Kidney (tissue), 22 donors: ENCODE measurements at regions of chr10 and their contacts with region 1.

Region 1: GRCh38 chr10:124530215-124530665 is 68.6 kb downstream of the LHPP start:
- DNase-seq: peak; percentile 86 to 94 (median 92)
- H3K4me3 ChIP-seq: no peak overlapping the region
- H3K27ac ChIP-seq: peak overlapping the region in 1 of 2 donors; percentile 4
- H3K4me1 ChIP-seq: peaks cover 0 to 2% (median 0%) of the 10 kb centered on the region in 3 donors
- H3K27me3 ChIP-seq: no peaks in the 10 kb centered on the region
- CTCF ChIP-seq: peak; percentile 96

Region 2: GRCh38 chr10:124632064-124632531 is 101.9 kb after region 1 on chr10:
- intact Hi-C with region 1: no loop called
- DNase-seq: peak in 2 of 5 donors; percentile 48 to 49
- H3K4me3 ChIP-seq: no peak overlapping the region
- H3K27ac ChIP-seq: no peak overlapping the region
- H3K4me1 ChIP-seq: peaks cover 0 to 27% (median 12%) of the 10 kb centered on the region in 3 donors
- H3K27me3 ChIP-seq: no peaks in the 10 kb centered on the region
- CTCF ChIP-seq: peak; percentile 29

Region 3: DNA sequence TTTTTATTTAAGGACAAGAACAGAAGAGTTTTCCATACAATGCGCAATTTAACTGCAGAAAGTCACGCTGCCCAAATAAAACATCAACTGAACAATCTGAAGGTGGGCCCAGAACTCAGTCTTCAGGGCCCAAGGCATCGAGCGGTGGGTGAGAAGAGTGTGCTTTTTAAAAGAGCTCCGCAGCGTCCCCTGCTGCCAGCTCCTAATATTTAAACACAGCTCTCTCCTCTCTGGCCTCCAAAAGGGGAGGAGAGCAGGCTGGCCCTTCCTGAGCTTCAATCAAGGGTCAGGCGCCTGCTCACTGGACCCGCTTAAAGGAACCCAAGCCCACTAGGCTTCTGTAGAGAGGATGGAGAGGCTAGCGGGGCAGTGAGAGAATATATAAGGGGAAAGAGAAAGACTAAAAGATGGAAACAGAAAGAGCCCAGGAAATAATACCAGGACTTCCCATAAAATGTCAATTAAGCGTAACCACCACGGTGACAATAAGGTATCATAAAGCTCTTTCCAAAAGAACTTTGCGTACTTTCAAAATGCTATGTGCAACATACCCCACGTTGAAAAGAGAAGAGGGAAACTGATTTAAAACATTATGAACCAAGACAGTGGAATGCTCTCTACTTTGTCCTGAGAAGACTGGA is 211.2 kb after region 1 on chr10:
- intact Hi-C with region 1: loop called (anchors 10 kb)
- DNase-seq: peak; percentile 88 to 96 (median 92)
- H3K4me3 ChIP-seq: peak overlapping the region; percentile 30 to 62 (median 48)
- H3K27ac ChIP-seq: peak overlapping the region; percentile 81 to 90
- H3K4me1 ChIP-seq: peaks cover 25 to 61% (median 59%) of the 10 kb centered on the region in 3 donors
- H3K27me3 ChIP-seq: no peaks in the 10 kb centered on the region
- CTCF ChIP-seq: peak; percentile 98